Dorsolateral prefrontal cortex (tissue), 120 donors: ENCODE measurements at regions of chr1 and their contacts with region 1.

Region 1: DNA sequence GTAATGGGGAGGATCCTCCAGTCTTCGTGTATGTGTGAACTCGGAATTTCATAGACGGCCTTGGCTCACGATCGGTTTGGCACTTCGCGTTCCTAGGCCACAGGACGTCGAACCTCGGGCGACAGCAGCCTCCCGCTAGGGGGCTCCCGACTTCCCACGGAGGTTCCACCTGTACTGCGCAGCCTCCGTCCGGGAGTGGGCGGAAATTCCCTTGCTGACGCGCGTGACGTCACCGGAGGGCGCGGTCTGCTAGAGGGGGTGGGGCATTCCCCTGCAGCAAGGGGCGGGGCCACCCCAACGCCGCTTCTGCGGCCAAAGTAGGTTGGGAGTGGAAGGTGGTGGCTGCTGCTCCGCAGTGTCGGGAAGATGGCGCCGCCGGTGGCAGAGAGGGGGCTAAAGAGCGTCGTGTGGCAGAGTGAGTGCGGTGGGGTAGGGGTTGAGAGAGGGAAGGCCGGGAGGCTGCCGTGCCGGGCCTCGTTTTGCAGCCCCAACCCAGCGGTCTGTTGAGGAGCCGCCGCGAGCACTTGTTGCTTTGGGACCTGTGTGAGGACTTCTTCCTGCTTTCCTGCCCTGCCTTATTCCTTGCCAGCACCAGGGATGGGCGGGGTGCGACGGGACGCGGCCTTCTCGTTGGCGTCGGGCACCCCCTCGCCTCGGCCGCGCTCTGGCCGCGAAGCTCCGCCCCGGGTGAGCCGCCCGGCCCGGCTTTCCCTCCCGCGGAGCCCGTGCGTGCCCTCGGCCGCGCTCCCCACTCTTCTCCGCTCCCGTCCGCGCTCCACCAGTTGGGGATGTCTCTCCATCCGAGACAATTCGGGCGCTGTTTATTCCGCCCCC is at the start of gene STXBP3:
- DNase-seq: peak; percentile 96 to 99 (median 98)
- H3K4me3 ChIP-seq: peak within 1 kb of the TSS; percentile 67 to 99 (median 89)
- H3K27ac ChIP-seq: peak within 1 kb of the TSS; percentile 83 to 100 (median 98)
- H3K27me3 ChIP-seq: no peaks in the 10 kb centered on the region
- CTCF ChIP-seq: peak; percentile 91 to 99 (median 97)
- total RNA-seq, gene STXBP3: 46.9 to 162 (median 74.2) TPM

Region 2: GRCh38 chr1:108158893-108159453 is 587.6 kb before region 1 on chr1:
- intact Hi-C with region 1: no loop called
- DNase-seq: no peak
- H3K4me3 ChIP-seq: no peak overlapping the region
- H3K27ac ChIP-seq: no peak overlapping the region
- H3K27me3 ChIP-seq: no peaks in the 10 kb centered on the region
- CTCF ChIP-seq: no peak

Region 3: DNA sequence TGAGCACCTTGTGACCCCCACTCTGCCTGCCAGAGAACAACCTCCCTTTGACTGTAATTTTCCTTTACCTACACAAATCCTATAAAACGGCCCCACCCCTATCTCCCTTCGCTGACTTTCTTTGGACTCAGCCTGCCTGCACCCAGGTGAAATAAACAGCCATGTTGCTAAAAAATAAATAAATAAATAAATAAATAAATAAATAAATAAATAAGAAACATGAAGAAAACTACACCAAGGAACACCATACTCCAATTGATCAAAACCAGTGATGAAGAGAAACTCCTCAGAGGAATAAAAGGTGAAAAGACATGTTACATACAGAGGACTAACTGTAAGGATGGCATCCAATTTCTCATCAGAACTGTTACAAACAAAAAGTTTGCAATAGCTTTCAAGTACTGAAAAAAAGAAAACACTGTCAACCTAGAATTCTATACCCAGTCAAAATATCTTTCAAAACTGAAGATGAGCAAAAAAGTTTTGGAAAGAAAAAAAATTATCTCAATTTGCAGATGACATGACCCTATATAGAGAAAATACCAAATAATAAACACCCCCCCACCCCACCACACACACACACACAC is 268.1 kb before region 1 on chr1:
- intact Hi-C with region 1: no loop called
- DNase-seq: no peak
- H3K4me3 ChIP-seq: no peak overlapping the region
- H3K27ac ChIP-seq: no peak overlapping the region
- H3K27me3 ChIP-seq: peaks cover 0 to 4% (median 0%) of the 10 kb centered on the region in 45 donors
- CTCF ChIP-seq: no peak

Region 4: GRCh38 chr1:108590957-108591356 is 155.6 kb before region 1 on chr1:
- intact Hi-C with region 1: no loop called
- DNase-seq: no peak
- H3K4me3 ChIP-seq: no peak overlapping the region
- H3K27ac ChIP-seq: no peak overlapping the region
- H3K27me3 ChIP-seq: no peaks in the 10 kb centered on the region
- CTCF ChIP-seq: no peak

Region 5: DNA sequence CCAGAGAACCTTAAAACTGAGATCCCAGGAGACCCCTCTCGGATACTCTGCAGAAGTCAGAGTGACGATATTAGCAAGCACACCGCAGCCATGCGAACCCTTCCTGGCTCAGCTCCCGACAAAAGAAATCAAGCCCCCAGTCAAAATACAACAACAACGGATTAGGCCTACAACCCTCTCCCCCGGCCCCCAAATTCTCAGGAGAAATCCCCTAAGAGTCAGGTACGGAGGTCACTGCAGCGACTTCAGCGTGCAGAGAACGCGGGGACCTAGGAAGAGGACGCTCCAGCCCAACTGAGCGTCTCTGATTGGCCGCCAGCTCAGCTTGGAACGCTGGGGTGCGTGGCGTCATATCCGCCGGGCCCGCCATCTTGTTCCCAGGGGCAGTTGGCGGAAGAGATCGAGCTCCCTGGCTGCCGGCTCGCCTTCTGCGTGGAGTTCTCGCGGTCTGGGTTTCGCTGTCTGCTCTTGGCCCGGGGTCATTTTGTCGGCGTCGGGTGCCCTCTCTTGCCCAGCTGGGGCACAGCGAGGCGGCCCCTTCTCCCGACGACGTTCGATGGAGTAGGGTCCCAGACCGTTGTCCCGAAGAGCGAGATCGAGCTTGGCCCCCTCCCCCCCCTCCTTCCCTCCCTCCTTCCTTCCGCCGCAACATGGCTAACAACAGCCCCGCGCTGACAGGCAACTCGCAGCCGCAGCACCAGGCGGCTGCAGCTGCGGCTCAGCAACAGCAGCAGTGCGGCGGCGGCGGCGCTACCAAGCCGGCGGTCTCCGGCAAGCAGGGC is 54.5 kb before region 1 on chr1 and contains the start of gene PRPF38B:
- intact Hi-C with region 1: loop called (anchors 1 to 2 kb)
- DNase-seq: peak; percentile 94 to 97 (median 96)
- H3K4me3 ChIP-seq: peak within 1 kb of the TSS; percentile 53 to 96 (median 87)
- H3K27ac ChIP-seq: peak within 1 kb of the TSS; percentile 91 to 99 (median 98)
- H3K27me3 ChIP-seq: no peaks in the 10 kb centered on the region
- CTCF ChIP-seq: peak in 24 of 56 donors; percentile 8 to 51 (median 26)
- total RNA-seq, gene PRPF38B: 22.4 to 46.1 (median 32.8) TPM

Region 6: GRCh38 chr1:108719656-108720435 is 26.7 kb before region 1 on chr1:
- intact Hi-C with region 1: loop called in 1 of 2 experiments (anchors 2 kb)
- DNase-seq: peak in 1 of 10 donors; percentile 20
- H3K4me3 ChIP-seq: peak overlapping the region in 2 of 59 donors; percentile 14 to 16
- H3K27ac ChIP-seq: peak overlapping the region in 53 of 59 donors; percentile 4 to 85 (median 71)
- H3K27me3 ChIP-seq: no peaks in the 10 kb centered on the region
- CTCF ChIP-seq: no peak

Region 7: GRCh38 chr1:108816049-108816893 is 69.7 kb after region 1 on chr1:
- intact Hi-C with region 1: loop called (anchors 2 kb)
- DNase-seq: peak; percentile 63 to 90 (median 83)
- H3K4me3 ChIP-seq: peak overlapping the region; percentile 16 to 63 (median 44)
- H3K27ac ChIP-seq: peak overlapping the region; percentile 80 to 100 (median 97)
- H3K27me3 ChIP-seq: no peaks in the 10 kb centered on the region
- CTCF ChIP-seq: peak in 8 of 56 donors; percentile 3 to 31 (median 10)

Region 8: GRCh38 chr1:108877348-108878159 is 131.0 kb after region 1 on chr1:
- intact Hi-C with region 1: loop called in 1 of 2 experiments (anchors 2 kb)
- DNase-seq: peak in 2 of 10 donors; percentile 28 to 32
- H3K4me3 ChIP-seq: peak overlapping the region; percentile 61 to 97 (median 85)
- H3K27ac ChIP-seq: peak overlapping the region in 57 of 59 donors; percentile 7 to 99 (median 92)
- H3K27me3 ChIP-seq: no peaks in the 10 kb centered on the region
- CTCF ChIP-seq: no peak

Region 9: GRCh38 chr1:108897865-108898720 is 151.5 kb after region 1 on chr1:
- intact Hi-C with region 1: loop called (anchors 5 kb)
- DNase-seq: peak in 3 of 10 donors; percentile 10 to 56 (median 22)
- H3K4me3 ChIP-seq: peak overlapping the region in 4 of 59 donors; percentile 6 to 25 (median 17)
- H3K27ac ChIP-seq: peak overlapping the region in 40 of 59 donors; percentile 7 to 86 (median 67)
- H3K27me3 ChIP-seq: no peaks in the 10 kb centered on the region
- CTCF ChIP-seq: peak; percentile 67 to 95 (median 83)

Region 10: GRCh38 chr1:109099938-109100773 is 353.6 kb after region 1 on chr1:
- intact Hi-C with region 1: loop called in 1 of 2 experiments (anchors 10 kb)
- DNase-seq: peak; percentile 91 to 97 (median 96)
- H3K4me3 ChIP-seq: peak overlapping the region; percentile 69 to 100 (median 97)
- H3K27ac ChIP-seq: peak overlapping the region; percentile 84 to 100 (median 98)
- H3K27me3 ChIP-seq: no peaks in the 10 kb centered on the region
- CTCF ChIP-seq: peak; percentile 83 to 99 (median 95)